ENCODE measurements at regions of chr15 and their contacts with region 1.

Region 1: GRCh38 chr15:31128919-31129768 is 27.6 kb upstream of the TRPM1 start:
- H3K4me3 ChIP-seq: no peak overlapping the region
- H3K27ac ChIP-seq: no peak overlapping the region
- H3K4me1 ChIP-seq: no peaks in the 10 kb centered on the region
- CTCF ChIP-seq: peak; percentile 58

Region 2: GRCh38 chr15:30895461-30896210 is 233.5 kb before region 1 on chr15:
- CTCF ChIA-PET with region 1: interaction called, 10 read pairs
- POLR2A ChIA-PET with region 1: no interaction called
- H3K4me3 ChIP-seq: no peak overlapping the region
- H3K27ac ChIP-seq: no peak overlapping the region
- H3K4me1 ChIP-seq: no peaks in the 10 kb centered on the region
- CTCF ChIP-seq: no peak

Region 3: DNA sequence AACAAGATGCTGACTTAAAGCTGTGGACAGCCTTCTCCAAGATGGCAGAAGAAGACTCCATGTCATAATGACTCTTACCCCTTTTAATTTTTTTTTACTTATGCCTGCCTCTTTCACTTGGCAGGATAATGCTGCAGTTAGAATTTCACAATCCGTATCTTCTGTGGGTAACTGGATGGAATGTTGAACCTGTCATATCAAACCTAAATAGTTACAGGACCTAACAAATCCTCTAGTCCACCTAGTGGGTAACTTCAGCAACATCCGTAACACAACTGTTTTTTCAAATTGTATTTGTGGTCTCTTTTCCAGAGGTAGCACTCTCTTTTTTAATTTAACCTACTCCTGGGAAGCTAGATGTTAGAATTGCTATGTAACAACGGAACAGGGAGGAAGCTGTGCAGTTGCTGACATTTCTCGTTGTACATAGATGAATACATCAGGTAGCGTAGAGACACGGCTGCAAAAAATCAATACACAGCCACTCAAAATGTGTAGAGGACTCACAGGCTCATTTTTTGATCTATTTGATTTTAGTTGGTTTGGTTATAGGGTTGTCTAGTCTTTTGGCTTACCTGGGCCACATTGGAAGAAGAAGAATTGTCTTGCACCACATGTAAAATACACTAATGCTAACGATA is 16.2 kb after region 1 on chr15:
- CTCF ChIA-PET with region 1: interaction called, 10 read pairs
- POLR2A ChIA-PET with region 1: interaction called, 3 read pairs
- H3K4me3 ChIP-seq: no peak overlapping the region
- H3K27ac ChIP-seq: no peak overlapping the region
- H3K4me1 ChIP-seq: no peaks in the 10 kb centered on the region
- CTCF ChIP-seq: no peak

Region 4: GRCh38 chr15:31571671-31572070 is 442.5 kb after region 1 on chr15:
- CTCF ChIA-PET with region 1: no interaction called
- POLR2A ChIA-PET with region 1: no interaction called
- H3K4me3 ChIP-seq: no peak overlapping the region
- H3K27ac ChIP-seq: no peak overlapping the region
- H3K4me1 ChIP-seq: no peaks in the 10 kb centered on the region
- CTCF ChIP-seq: no peak